ENCODE measurements at regions of chr3 and their contacts with region 1.

Region 1: DNA sequence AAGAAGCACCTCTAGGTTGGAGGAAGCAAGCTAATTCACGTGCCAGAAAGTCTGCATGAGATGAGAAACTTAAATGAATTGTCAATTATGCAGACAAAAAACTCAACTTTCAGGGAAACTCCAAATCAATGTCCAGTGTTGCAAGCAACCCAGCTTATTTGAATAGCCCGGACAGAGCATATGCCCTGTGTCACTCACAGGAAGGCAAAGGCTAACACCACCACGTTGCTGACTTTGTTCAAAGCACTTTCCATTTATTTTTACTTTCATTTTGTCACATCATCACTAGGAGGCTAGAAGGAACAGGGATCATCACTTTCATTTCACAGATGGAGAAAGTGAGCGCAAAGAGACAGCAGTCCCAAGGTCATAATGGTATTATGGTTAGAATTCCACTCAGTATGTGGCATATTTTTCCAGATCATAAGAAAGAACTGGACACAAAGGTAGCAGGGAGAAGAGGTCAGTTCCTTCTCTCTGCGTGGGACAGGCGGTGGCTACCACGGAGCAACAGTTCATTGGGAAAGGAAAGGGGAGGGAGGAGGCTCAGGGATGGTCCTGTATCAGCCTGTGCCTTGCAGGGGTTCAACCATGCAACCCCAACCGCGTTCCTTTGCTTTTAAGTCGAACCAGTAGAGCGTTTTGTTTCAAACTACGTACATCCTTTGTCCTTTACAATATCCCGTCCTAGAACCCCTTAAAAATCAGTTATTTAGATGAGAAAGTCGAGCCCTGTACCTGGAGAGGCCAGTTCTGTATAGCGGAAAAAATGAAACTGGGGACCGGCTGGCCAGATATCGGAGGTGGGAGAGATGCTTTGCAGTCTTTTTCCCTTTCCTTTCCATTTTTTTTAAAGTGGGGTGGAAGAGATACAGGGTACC is 1.1 kb downstream of the HEG1 start:
- DNase-seq: no peak
- ATAC-seq: no peak
- H3K4me3 Mint-ChIP-seq: peak overlapping the region; percentile 97
- H3K27ac Mint-ChIP-seq: peak overlapping the region; percentile 96
- H3K4me1 Mint-ChIP-seq: peaks cover 48% of the 10 kb centered on the region
- H3K27me3 Mint-ChIP-seq: no peaks in the 10 kb centered on the region

Region 2: GRCh38 chr3:125098611-125099291 is 44.1 kb after region 1 on chr3:
- POLR2A ChIA-PET with region 1: no interaction called
- DNase-seq: no peak
- ATAC-seq: no peak
- H3K4me3 Mint-ChIP-seq: no peak overlapping the region
- H3K27ac Mint-ChIP-seq: no peak overlapping the region
- H3K4me1 Mint-ChIP-seq: peaks cover 3% of the 10 kb centered on the region
- H3K27me3 Mint-ChIP-seq: peaks cover 5% of the 10 kb centered on the region

Region 3: GRCh38 chr3:125119752-125120378 is 65.2 kb after region 1 on chr3:
- POLR2A ChIA-PET with region 1: interaction called, 11 read pairs
- DNase-seq: peak; percentile 52
- ATAC-seq: peak; percentile 55
- H3K4me3 Mint-ChIP-seq: peak overlapping the region; percentile 58
- H3K27ac Mint-ChIP-seq: peak overlapping the region; percentile 91
- H3K4me1 Mint-ChIP-seq: peaks cover 43% of the 10 kb centered on the region
- H3K27me3 Mint-ChIP-seq: no peaks in the 10 kb centered on the region